ENCODE measurements at regions of chr17 and their contacts with region 1.

Region 1: GRCh38 chr17:39153599-39154051 is 2.2 kb upstream of the PLXDC1 start:
- DNase-seq: peak; percentile 88
- H3K4me3 Mint-ChIP-seq: peak overlapping the region; percentile 98
- H3K27ac Mint-ChIP-seq: peak overlapping the region; percentile 98
- H3K4me1 Mint-ChIP-seq: peaks cover 29% of the 10 kb centered on the region
- H3K27me3 Mint-ChIP-seq: peaks cover 45% of the 10 kb centered on the region

Region 2: DNA sequence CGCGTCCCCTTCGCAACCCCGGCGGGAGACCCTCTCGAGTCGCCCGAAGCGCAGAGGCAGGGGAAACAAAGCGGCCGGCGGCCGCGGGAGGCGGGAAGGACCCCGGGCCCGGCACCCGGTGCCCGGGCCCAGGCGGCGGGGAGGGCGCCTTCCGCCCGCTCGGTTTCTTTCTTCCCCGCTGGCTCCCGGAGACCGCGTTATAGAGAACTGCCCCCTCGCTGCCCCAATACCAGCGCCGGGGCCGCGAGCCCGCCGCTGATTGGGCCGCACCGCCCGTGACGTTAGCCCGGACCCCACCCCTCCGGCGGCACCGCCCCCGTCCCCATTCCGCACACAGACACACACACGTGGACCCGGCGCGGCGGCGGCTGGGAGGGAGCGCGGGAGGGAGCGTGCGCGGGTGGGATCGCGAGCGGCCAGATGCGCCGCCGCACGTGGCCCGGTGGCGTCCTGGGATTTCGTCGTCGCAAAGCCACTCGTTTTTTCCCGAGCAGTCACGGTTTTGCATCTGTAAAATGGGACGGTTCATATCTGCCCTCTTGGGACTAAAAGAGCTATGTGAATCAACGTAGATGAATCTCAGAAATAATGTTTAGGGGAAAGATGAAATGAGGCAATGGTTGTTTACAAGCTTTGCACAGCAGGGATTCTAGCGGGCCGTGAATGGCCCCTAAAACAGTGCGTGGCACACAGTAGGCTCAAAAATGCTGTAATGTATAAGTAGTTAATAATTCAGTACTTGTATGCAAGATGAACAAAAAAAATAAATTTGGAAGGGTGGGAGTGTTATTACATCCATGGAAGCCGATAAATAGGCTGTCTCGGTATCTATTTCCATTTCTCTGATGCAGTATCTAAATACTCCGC is 478.6 kb before region 1 on chr17 and contains the start of gene EPOP:
- intact Hi-C with region 1: loop called (anchors 5 kb)
- DNase-seq: peak; percentile 90
- H3K4me3 Mint-ChIP-seq: peak within 1 kb of the TSS; percentile 71
- H3K27ac Mint-ChIP-seq: peak within 1 kb of the TSS; percentile 86
- H3K4me1 Mint-ChIP-seq: peaks cover 45% of the 10 kb centered on the region
- H3K27me3 Mint-ChIP-seq: peaks cover 22% of the 10 kb centered on the region
- total RNA-seq, gene EPOP: 56.5 and 58.8 TPM in 2 replicates

Region 3: DNA sequence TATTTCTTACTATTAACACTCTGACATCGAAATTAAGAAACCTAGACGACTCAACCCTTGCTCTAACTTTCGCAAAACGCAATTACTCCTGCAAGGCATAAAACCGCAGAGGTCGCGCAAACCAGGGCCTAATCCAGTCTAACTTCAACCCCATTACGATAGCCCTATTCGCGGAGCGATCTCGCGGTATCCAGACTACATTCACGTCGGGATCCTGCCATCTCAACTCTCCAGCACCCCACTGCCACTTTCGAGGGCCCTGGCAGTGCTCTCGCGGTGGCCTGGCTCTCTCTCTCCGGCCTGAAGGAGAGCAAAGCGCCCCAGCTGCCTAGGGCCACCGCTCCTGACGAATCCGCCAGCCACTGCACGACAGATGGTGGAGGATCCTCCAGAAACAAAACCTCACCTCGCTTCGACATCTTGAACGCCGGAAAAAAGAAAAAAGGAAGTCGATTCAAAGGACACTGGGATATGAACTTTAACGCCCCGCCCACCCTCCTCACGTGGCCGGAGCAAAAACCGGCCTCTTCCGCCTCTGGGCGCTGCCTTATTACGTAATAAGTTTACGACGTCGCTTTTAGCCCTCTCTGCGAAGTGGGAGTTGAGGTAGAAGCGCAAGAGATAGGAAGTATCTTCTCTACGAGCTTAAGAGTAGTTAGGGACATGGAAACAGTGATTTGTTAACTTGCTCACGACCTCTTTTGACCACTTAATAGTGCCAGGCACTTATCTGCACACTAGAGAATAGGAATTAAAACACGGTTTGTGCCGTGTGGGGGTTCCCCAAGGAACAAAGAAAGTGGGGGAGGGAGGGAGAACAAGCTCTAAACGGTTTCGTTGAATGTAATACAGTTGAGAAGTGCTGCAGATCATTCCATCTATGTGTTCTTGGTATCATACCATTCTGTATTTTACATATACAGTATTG is 300.1 kb before region 1 on chr17 and contains the start of gene RPL23:
- intact Hi-C with region 1: loop called (anchors 1 kb)
- DNase-seq: peak; percentile 90
- H3K4me3 Mint-ChIP-seq: peak within 1 kb of the TSS; percentile 99
- H3K27ac Mint-ChIP-seq: peak within 1 kb of the TSS; percentile 97
- H3K4me1 Mint-ChIP-seq: peaks cover 44% of the 10 kb centered on the region
- H3K27me3 Mint-ChIP-seq: no peaks in the 10 kb centered on the region
- total RNA-seq, gene RPL23: 1,847 and 1,871 TPM in 2 replicates

Region 4: DNA sequence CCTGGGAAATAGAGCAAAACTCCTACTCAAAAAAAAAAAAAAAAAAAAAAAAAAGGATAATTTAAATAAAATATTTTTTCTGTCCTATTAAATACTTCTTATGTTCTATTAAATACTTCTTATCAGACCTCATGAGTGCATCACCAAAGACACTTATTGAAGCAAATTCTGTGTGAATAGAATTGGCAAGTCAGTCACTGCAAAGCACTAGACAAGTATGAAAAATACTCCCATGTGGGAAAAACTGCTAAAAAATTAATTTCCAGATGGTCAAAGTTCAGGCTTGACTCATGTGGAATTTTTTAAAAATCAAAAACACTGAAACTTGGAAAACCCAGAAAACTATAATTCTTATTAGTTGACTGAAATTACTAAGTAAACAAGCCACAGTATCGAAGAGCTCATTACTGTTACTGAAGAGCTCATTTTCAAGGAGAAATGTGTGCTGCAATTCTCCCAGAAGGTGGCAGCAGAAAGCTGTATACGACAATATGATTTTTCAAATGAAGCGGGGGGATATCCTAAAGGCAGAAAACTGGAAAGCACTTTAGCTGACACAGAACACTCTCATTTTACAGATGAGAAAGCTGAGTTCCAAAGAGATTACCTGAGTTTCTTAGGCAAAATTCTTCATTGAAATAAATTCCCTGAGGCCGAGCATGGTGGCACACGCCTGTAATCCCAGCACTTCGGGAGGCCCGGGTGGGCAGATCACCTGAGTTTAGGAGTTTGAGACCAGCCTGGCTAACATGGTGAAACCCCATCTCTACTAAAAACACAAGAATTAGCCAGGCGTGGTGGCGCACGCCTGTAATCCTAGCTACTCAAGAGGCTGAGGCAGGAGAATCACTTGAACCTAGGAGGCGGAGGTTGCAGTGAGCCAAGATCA is 170.5 kb before region 1 on chr17:
- intact Hi-C with region 1: loop called (anchors 1 kb)
- DNase-seq: peak; percentile 12
- H3K4me3 Mint-ChIP-seq: no peak overlapping the region
- H3K27ac Mint-ChIP-seq: no peak overlapping the region
- H3K4me1 Mint-ChIP-seq: peaks cover 8% of the 10 kb centered on the region
- H3K27me3 Mint-ChIP-seq: peaks cover 6% of the 10 kb centered on the region

Region 5: DNA sequence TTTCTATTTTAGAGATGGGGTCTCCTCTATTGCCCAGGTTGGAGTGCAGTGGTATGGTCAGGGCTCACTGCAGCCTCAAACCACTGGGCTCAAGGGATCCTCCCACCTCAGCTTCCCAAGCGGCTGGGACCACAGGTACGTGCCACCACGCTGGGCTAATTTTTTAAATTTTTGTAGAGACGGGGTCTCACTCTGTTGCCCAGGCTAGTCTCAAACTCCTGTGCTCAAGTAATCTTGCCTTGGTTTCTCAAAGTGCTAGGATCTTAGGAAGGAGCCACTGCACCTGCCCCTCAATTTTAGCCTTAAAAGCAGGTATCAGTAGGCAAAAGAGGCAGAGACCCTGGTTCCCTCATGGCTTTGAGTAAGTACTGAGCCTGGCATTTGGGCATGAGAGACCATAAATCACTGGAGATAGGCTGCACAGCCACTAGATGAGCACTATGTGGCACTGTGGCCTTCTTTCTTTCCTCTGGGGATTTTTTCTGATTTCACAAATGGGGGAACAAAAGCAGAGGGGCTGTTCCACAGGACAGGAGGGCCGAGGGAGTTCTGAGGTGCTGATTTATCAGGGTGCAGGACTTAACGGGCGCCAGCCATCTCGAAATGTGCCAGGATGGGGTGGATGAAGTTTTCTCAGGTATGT is 84.4 kb before region 1 on chr17:
- intact Hi-C with region 1: loop called (anchors 1 kb)
- DNase-seq: no peak
- H3K4me3 Mint-ChIP-seq: no peak overlapping the region
- H3K27ac Mint-ChIP-seq: no peak overlapping the region
- H3K4me1 Mint-ChIP-seq: peaks cover 12% of the 10 kb centered on the region
- H3K27me3 Mint-ChIP-seq: peaks cover 1% of the 10 kb centered on the region

Region 6: GRCh38 chr17:39164675-39165143 is 11.1 kb after region 1 on chr17:
- intact Hi-C with region 1: loop called (anchors 1 kb)
- DNase-seq: peak; percentile 62
- H3K4me3 Mint-ChIP-seq: peak overlapping the region; percentile 80
- H3K27ac Mint-ChIP-seq: peak overlapping the region; percentile 2
- H3K4me1 Mint-ChIP-seq: peaks cover 29% of the 10 kb centered on the region
- H3K27me3 Mint-ChIP-seq: peaks cover 28% of the 10 kb centered on the region

Region 7: GRCh38 chr17:39244600-39245570 is 91.3 kb after region 1 on chr17:
- intact Hi-C with region 1: loop called (anchors 2 kb)
- DNase-seq: peak; percentile 73
- H3K4me3 Mint-ChIP-seq: no peak overlapping the region
- H3K27ac Mint-ChIP-seq: no peak overlapping the region
- H3K4me1 Mint-ChIP-seq: peaks cover under 1% of the 10 kb centered on the region
- H3K27me3 Mint-ChIP-seq: peaks cover 6% of the 10 kb centered on the region

Measured in activated T-helper 1 cell treated with anti-CD3 and anti-CD28 coated beads, Interleukin-12 subunit alpha, Interleukin-12 subunit beta, Interleukin-2, Interleukin-4 antibody, amounts not matched to agents 30 ng/mL and 10 ng/mL and 1 ng/mL, durations not matched to agents 14 hours and 24 hours and 36 hours (primary cell).